Activated T-helper 2 cell treated with anti-CD3 and anti-CD28 coated beads, Interferon-gamma antibody, Interleukin-2, Interleukin-4, amounts not matched to agents 10 μg/mL and 5 μg/mL and 100 μg/mL, durations not matched to agents 14 hours and 24 hours and 36 hours (primary cell): ENCODE measurements at regions of chr18 and their contacts with region 1.

Region 1: GRCh38 chr18:56638271-56639093 is at the start of gene TXNL1:
- DNase-seq: peak; percentile 98
- H3K4me3 Mint-ChIP-seq: peak within 1 kb of the TSS; percentile 99
- H3K27ac Mint-ChIP-seq: peak within 1 kb of the TSS; percentile 87
- H3K4me1 Mint-ChIP-seq: peaks cover 36% of the 10 kb centered on the region
- H3K27me3 Mint-ChIP-seq: no peaks in the 10 kb centered on the region
- total RNA-seq, gene TXNL1: 95.1 and 96.3 TPM in 2 replicates

Region 2: DNA sequence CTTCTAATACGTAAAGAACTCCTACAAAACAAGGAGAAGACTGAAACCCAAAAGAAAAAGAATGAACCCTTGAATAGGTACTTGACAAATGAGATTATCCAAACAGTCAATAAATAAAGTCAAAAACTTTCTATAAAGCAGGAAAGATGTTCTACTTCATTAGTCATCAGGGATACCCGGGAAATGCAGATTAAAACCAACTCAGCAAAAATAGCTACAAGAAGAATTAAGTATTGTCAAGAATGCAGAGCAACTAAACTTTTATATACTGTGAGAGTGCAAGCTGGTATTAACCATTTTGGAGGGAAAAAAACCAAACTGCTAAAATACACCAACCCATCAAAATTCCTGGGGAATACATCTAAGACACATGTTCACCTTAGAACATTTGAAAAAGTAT is 10.5 kb before region 1 on chr18:
- intact Hi-C with region 1: loop called (anchors 2 kb)
- DNase-seq: no peak
- H3K4me3 Mint-ChIP-seq: no peak overlapping the region
- H3K27ac Mint-ChIP-seq: no peak overlapping the region
- H3K4me1 Mint-ChIP-seq: peaks cover 25% of the 10 kb centered on the region
- H3K27me3 Mint-ChIP-seq: no peaks in the 10 kb centered on the region

Region 3: GRCh38 chr18:56696966-56697365 is 58.5 kb after region 1 on chr18:
- intact Hi-C with region 1: no loop called
- DNase-seq: no peak
- H3K4me3 Mint-ChIP-seq: no peak overlapping the region
- H3K27ac Mint-ChIP-seq: no peak overlapping the region
- H3K4me1 Mint-ChIP-seq: peaks cover 6% of the 10 kb centered on the region
- H3K27me3 Mint-ChIP-seq: no peaks in the 10 kb centered on the region